Esophagus squamous epithelium (tissue), 5 donors: ENCODE measurements at regions of chr2 and their contacts with region 1.

Region 1: DNA sequence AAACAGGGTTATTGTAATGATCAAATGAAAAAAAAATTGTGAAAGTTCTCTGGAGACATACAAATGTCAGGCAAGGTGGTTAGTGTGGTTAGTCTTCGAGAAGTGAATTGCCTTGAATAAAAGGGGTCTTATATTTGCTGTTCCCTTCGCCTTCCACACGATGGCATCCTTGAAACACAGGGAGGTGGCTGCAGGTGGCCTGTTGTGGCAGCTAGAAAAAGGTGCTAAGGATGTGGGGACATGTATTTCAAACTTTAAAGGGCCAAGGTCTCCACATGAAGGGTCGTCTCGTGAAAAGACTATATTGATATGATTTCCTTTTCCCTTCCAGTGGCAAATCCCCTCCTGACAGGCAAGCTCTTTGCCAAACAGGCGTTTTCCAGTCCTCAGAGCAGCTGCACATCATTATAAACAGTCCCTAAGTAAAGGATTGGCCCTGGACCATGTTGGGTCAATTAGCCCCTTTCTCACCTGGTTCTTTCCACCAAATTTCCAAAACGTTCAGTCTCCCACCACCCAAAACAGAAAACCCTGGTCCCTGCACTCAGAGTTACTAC is 68.5 kb downstream of the COPS8 start:
- DNase-seq: no peak
- H3K4me3 ChIP-seq: no peak overlapping the region
- H3K27ac ChIP-seq: no peak overlapping the region
- H3K4me1 ChIP-seq: peaks cover 0 to 17% (median 0%) of the 10 kb centered on the region in 3 donors
- H3K27me3 ChIP-seq: peaks cover 0 to 21% (median 0%) of the 10 kb centered on the region in 4 donors
- CTCF ChIP-seq: peak in 5 of 6 experiments; percentile 39 to 74 (median 53)
- POLR2A ChIP-seq: no peak

Region 2: GRCh38 chr2:237474931-237475703 is 321.0 kb after region 1 on chr2:
- intact Hi-C with region 1: loop called (anchors 10 kb)
- DNase-seq: no peak
- H3K4me3 ChIP-seq: peak overlapping the region; percentile 56 to 91 (median 74)
- H3K27ac ChIP-seq: peak overlapping the region; percentile 87 to 96 (median 91)
- H3K4me1 ChIP-seq: peaks cover 6 to 55% (median 12%) of the 10 kb centered on the region in 3 donors
- H3K27me3 ChIP-seq: peaks cover 0 to 8% (median 0%) of the 10 kb centered on the region in 4 donors
- CTCF ChIP-seq: peak; percentile 84 to 96 (median 88)
- POLR2A ChIP-seq: peak in 2 of 4 donors; percentile 54 to 61